Gastrocnemius medialis (tissue), 4 donors: ENCODE measurements at regions of chr7 and their contacts with region 1.

Region 1: GRCh38 chr7:1725199-1725690 is 55.2 kb downstream of the ELFN1 start:
- DNase-seq: peak; percentile 85 to 88
- ATAC-seq: peak; percentile 90
- H3K4me3 ChIP-seq: no peak overlapping the region
- H3K27ac ChIP-seq: peak overlapping the region in 3 of 4 donors; percentile 45 to 80 (median 75)
- H3K4me1 ChIP-seq: peaks cover 9 to 11% of the 10 kb centered on the region in 2 donors
- H3K27me3 ChIP-seq: no peaks in the 10 kb centered on the region
- CTCF ChIP-seq: no peak
- POLR2A ChIP-seq: peak in 1 of 2 donors; percentile 15

Region 2: GRCh38 chr7:1637155-1637554 is 88.1 kb before region 1 on chr7:
- in situ Hi-C with region 1: no loop called
- intact Hi-C with region 1: no loop called
- DNase-seq: no peak
- ATAC-seq: no peak
- H3K4me3 ChIP-seq: no peak overlapping the region
- H3K27ac ChIP-seq: peak overlapping the region in 2 of 4 donors; percentile 80 to 86
- H3K4me1 ChIP-seq: peaks cover 8 to 20% of the 10 kb centered on the region in 2 donors
- H3K27me3 ChIP-seq: no peaks in the 10 kb centered on the region
- CTCF ChIP-seq: no peak
- POLR2A ChIP-seq: no peak

Region 3: GRCh38 chr7:1646957-1647891 is 78.0 kb before region 1 on chr7:
- in situ Hi-C with region 1: no loop called
- intact Hi-C with region 1: loop called (anchors 5 kb)
- DNase-seq: peak; percentile 31 to 33
- ATAC-seq: peak; percentile 39 to 64
- H3K4me3 ChIP-seq: peak overlapping the region in 1 of 4 donors; percentile 17
- H3K27ac ChIP-seq: peak overlapping the region; percentile 27 to 90 (median 78)
- H3K4me1 ChIP-seq: peaks cover 34 to 37% of the 10 kb centered on the region in 2 donors
- H3K27me3 ChIP-seq: no peaks in the 10 kb centered on the region
- CTCF ChIP-seq: no peak
- POLR2A ChIP-seq: no peak